Aorta (tissue), 5 donors: ENCODE measurements at regions of chr5 and their contacts with region 1.

Region 1: GRCh38 chr5:146794326-146795029 is 84.1 kb downstream of the PPP2R2B start:
- DNase-seq: no peak
- ATAC-seq: peak; percentile 58
- H3K4me3 ChIP-seq: no peak overlapping the region
- H3K27ac ChIP-seq: no peak overlapping the region
- H3K4me1 ChIP-seq: peaks cover 11 to 20% of the 10 kb centered on the region in 2 donors
- H3K27me3 ChIP-seq: no peaks in the 10 kb centered on the region

Region 2: DNA sequence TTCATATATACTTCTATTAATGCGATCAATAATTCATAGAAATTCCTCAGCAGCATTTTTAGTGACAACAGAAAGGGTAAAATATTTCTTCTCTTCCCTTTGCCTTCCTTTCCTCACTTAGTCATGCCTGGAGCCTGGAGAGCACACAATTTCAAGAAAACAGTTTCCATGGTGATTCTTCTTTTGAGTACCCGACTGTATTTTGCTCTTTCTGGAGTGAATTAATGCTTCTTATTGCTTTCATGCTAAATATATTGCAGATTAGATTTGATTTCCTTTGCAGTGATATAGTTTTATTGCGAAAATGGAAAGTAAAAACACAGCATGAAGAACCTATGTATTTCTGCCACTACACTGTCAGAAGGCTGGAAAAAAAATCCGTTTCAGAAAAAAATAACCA is 69.5 kb before region 1 on chr5:
- intact Hi-C with region 1: loop called in 1 of 2 experiments (anchors 5 kb)
- DNase-seq: no peak
- ATAC-seq: no peak
- H3K4me3 ChIP-seq: no peak overlapping the region
- H3K27ac ChIP-seq: no peak overlapping the region
- H3K4me1 ChIP-seq: peaks cover 0 to 5% of the 10 kb centered on the region in 2 donors
- H3K27me3 ChIP-seq: no peaks in the 10 kb centered on the region